ENCODE measurements at regions of chr6 and their contacts with region 1.

Region 1: GRCh38 chr6:108113557-108114519 is 39.3 kb upstream of the OSTM1 start:
- DNase-seq: peak; percentile 33
- ATAC-seq: peak; percentile 40

Region 2: DNA sequence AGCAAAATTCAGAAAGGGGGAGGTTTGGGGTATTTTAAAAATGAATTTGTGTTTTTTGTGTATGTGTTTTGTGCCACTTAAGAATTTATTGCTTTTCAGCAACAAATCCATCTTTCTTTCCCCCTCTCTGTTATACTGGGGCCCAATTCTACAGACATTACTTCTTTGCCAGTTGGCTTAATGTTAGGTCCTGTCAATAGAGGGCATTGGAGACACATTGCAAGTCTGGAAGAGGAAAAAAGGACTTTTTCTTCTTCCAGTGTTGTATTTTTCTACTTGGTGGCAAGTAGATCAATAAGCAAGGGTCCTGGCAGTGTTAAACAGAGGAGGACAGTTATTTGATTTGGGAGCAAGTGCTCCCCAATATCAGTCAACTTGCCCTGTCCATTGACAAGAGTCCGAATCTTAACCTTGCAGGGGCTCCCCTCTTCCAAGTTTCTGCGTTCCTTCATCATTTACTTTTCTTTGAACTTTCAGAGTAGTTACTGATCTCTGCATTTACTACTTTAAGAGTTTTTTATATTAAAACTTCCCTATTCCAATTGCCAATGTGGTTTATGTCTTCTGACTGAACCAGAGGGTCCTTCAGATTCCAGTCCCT is 313.2 kb before region 1 on chr6:
- intact Hi-C with region 1: no loop called
- DNase-seq: no peak
- ATAC-seq: no peak

Region 3: DNA sequence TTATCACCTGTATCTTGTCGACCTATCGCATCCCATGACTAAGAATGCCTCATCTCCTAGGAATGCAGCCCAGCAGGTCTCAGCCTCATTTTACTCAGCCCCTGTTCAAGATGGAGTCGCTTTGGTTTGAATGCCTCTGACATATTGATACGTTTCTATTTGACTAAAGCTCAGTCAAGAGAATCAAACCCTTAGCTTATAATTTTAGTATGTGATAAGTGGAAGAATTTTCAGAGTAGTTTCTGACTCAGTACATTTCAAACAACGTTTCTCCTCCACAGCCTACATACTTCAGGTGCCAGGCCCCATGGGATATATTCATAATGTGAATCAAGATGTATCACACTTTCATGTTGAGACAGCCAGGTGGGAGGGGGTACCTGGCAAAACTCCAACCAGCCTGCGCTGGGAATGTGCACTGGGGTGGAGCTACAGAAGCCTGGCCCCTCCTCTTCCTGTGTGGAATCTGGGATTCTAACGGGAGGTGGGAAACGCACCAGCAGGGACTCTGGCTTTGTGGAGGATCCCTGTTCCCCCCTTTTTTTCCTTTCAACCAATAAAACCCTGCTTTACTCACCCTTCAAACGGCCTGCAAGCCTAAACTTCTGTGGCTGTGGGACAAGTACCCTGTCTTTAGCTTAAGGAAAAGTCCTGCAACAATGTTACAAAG is 149.0 kb before region 1 on chr6:
- intact Hi-C with region 1: no loop called
- DNase-seq: no peak
- ATAC-seq: no peak

Region 4: DNA sequence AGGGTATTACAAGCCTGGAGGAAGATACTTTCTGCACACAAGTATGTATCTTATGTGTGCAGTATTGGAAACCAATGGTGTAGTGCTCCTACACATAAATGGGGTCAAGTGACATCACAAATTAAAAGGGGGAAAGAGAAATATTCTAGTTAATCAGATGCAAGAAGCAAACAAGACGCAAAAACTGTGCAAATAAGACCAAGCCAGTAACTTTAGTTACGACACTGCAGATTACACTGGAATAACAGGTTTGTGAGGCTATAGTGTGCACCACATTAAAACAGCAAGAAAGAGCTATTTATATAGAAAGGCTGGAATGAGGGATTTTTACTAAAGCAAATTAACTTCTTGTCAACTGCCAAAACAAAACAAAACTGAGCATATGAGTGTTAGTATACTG is 97.8 kb after region 1 on chr6:
- intact Hi-C with region 1: no loop called
- DNase-seq: no peak
- ATAC-seq: no peak

Region 5: GRCh38 chr6:108492131-108492766 is 378.4 kb after region 1 on chr6:
- intact Hi-C with region 1: loop called (anchors 10 kb)
- DNase-seq: no peak
- ATAC-seq: peak; percentile 35

Region 6: DNA sequence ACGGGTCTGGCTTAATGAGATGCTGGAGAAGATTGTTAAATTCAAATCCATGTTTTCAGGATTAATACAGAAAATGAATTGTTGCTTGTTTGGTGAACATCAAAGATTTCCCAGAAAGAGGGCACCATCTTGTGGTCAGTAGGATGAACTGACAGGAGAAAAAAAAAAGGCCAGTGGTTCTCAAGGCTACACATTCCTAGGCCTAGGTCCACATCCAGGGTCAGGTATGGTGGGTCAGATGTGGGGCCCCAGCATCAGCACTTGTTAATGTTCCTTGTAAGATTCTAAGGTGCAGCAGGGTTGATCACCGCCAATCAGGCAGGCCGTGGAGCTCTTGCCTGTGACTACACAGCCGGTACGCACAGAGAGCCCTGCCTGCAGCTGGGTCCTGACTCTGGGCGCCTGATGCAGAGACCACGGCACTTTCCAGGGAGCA is 412.9 kb after region 1 on chr6:
- intact Hi-C with region 1: loop called (anchors 5 kb)
- DNase-seq: no peak
- ATAC-seq: peak; percentile 45